ENCODE measurements at regions of chr5 and their contacts with region 1.

Region 1: DNA sequence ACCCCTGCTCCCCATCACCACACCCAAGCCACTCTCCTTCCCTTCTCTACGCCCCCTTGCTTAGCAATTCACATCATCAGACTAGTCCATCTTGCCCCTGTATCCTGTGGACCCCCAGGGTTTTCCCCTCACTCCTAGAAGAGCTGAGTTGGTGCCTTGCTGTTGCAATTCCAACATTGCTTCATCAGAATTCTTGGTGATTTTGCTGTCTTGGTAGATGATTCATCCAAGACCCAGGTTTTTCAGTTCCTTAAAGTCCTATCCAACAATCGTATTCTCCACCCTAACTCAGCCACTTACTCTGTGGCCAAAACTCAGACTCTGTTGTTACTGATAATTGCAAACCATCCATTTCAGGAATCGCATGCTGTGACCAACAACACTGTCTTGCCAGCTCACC is 21.4 kb upstream of the CCNJL start:
- DNase-seq: no peak
- CTCF ChIP-seq: no peak

Region 2: DNA sequence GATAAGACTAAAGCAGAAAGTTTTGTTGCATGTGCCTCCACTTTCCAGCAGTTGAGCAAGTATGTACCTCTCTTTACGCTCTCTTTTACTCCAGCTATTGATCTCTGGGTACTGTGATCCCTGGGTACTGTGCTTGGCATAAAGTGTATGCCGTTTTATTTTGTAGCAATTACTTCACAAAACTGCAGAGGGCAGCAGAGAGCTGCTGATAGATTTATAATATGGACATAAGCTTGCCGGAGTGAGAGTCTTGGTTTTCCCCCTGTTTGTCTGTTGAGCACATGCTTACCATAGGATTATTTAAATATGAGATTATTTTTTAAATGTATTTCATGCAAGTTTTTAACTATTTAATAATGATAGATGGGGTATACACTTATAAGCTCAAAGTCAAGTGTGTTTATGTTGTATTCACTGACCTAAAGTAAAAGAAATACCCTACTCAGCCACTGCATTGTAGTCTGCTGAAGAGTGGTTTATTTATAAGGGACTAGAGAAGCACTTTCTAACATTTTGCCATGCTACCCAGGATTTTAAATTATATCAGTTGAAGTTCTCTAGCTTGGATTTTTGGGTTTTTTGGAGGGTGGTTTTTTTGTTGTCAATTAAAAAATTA is 311.8 kb before region 1 on chr5:
- in situ Hi-C with region 1: loop called (anchors 10 kb)
- DNase-seq: peak; percentile 61
- CTCF ChIP-seq: peak; percentile 68

Region 3: GRCh38 chr5:161183559-161183958 is 849.8 kb after region 1 on chr5:
- in situ Hi-C with region 1: no loop called
- DNase-seq: no peak
- CTCF ChIP-seq: no peak

Measured in GM13977 (cell line).